Activated CD4-positive, alpha-beta memory T cell treated with anti-CD3 and anti-CD28 coated beads for 36 hours (primary cell): ENCODE measurements at regions of chr6 and their contacts with region 1.

Region 1: DNA sequence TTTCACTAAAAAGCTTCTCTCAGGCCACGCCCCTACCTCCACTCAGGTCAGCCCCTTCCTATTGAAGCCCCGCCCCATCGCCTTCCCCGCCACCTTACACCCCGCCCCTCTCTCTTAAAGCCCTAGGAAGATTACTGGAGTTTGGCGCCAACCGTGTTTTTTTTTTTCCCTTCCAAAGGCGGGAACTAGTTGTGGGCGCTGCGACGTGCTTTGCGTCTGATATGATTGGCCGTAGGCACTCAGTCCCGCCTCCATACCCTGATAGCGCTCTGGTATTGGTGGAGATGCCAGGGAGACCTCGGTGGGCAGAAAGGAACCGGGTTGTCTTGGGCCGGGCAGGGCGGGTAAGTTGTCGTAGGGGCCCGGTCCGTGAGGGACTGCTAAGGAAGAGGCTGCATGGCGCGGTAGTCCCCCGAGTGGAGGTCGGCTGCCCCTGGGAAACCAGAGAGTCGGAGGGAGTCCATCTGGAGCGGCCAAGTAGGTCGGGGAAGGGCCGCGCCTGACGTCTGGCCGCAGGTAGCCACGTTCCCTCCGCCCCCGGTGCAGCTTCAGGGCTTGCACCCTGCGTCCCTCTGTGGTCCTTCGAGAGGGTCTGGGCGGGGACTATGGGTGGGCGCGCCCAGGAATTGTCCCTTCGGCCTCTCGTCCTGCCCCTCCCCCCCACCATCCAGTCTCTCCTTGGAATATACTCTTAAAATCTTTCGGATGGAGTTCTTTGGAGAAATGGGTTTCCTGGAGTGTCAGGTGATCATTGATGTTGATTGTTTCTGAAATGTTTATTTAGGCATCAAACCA is at the start of gene CASP8AP2:
- DNase-seq: peak; percentile 98
- H3K4me3 Mint-ChIP-seq: peak within 1 kb of the TSS; percentile 99
- H3K27ac Mint-ChIP-seq: peak within 1 kb of the TSS; percentile 95
- H3K4me1 Mint-ChIP-seq: peaks cover 34% of the 10 kb centered on the region
- H3K27me3 Mint-ChIP-seq: no peaks in the 10 kb centered on the region
- total RNA-seq, gene CASP8AP2: 32.4 to 34.2 TPM

Region 2: DNA sequence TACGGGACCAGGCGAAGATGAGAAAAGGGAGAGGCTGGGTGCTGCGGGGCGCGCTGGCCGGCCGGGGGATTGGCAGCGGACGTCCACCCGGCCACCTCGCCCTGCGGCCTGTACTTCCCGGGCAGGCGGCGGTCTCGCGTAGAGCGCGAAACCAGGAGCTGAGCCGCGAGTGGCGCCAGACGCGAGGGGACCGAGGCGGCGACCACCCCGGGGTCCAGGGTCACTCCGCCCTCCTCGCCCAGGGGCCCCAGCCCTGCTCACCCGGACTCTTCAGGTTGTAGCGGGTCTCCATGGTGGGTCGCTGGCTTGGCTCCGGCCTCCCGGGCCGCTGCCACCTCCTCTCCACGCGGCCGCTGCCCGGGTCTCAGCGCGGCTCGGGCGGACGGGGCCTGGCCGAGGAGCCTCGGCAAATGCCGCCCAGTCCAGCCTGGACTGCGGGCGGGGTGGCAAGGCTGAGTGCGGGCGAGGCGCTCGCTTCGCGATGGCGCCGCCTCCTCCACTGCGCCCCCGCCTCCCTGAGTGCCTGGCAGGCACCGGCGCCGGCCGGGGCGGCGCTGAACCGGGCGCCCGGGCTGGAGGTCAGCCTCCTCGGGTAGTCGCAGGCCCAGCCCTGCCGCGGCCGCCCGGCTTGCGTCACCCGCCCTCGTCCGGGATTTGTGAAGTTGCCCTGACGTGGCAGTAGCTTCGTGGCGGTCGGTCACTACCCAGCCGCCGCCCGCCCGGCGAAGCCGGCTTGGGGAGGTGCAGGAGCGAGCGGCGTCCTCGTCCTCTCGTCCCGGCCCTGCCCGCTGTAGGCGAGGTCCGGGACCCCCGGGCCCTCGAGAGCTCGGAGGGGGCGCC is 477.3 kb before region 1 on chr6 and contains the start of gene UBE2J1:
- CTCF ChIA-PET with region 1: no interaction called
- POLR2A ChIA-PET with region 1: no interaction called
- intact Hi-C with region 1: loop called (anchors 10 kb)
- DNase-seq: peak; percentile 85
- H3K4me3 Mint-ChIP-seq: peak within 1 kb of the TSS; percentile 91
- H3K27ac Mint-ChIP-seq: peak within 1 kb of the TSS; percentile 84
- H3K4me1 Mint-ChIP-seq: peaks cover 75% of the 10 kb centered on the region
- H3K27me3 Mint-ChIP-seq: no peaks in the 10 kb centered on the region
- total RNA-seq, gene UBE2J1: 23.8 to 24.9 TPM

Region 3: GRCh38 chr6:89432875-89433251 is 396.9 kb before region 1 on chr6 and contains the start of gene ANKRD6:
- CTCF ChIA-PET with region 1: no interaction called
- POLR2A ChIA-PET with region 1: no interaction called
- intact Hi-C with region 1: loop called (anchors 10 kb)
- DNase-seq: peak; percentile 85
- H3K4me3 Mint-ChIP-seq: peak within 1 kb of the TSS; percentile 69
- H3K27ac Mint-ChIP-seq: peak within 1 kb of the TSS; percentile 30
- H3K4me1 Mint-ChIP-seq: peaks cover 21% of the 10 kb centered on the region
- H3K27me3 Mint-ChIP-seq: peaks cover 1% of the 10 kb centered on the region
- total RNA-seq, gene ANKRD6: 3.1 to 4.0 TPM

Region 4: DNA sequence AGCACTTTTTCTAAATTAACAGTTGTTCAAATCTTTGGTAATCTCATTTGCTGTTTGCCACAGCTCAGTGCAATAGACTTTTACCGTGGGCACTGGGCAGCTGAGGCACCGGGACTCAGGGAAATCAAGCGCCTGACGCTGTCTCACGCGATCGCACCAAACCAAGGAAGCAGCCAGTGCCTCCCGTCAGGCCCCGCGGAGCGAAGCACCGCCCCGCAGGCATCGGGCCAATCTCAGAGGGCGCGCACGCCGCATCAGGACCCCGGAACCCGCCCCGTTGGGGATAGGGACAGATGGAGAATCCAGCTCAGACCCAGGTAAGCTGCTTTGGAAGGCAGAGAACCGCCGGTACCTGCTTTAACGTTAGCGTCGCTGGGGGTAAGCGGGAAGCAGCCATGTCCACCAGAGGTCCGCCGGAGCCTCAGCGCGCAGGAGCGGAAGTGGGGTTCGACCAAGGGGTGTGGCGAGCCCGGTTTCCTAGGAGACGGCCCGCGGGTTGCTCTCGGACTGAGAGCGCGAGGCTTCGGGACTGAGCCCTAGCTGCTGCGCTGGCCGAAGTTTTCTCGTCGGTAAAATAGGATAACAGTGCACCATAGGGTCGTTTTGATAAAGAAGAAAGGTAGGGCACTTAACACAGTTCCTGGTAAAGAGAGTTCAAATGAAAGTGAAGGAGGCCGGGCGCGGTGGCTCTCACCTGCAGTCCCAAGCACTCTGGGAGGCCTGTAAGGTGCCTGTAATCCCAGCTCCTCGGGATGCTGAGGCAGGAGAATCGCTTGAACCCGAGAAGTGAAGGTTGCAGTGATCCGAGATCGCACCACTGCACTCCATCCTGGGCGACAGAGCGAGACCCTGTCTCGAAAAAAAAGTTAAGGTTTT is 191.2 kb before region 1 on chr6 and contains the start of gene LYRM2:
- CTCF ChIA-PET with region 1: no interaction called
- POLR2A ChIA-PET with region 1: interaction called, 5 read pairs
- intact Hi-C with region 1: loop called (anchors 1 kb)
- DNase-seq: peak; percentile 95
- H3K4me3 Mint-ChIP-seq: peak within 1 kb of the TSS; percentile 81
- H3K27ac Mint-ChIP-seq: peak within 1 kb of the TSS; percentile 96
- H3K4me1 Mint-ChIP-seq: peaks cover 32% of the 10 kb centered on the region
- H3K27me3 Mint-ChIP-seq: no peaks in the 10 kb centered on the region
- total RNA-seq, gene LYRM2: 25.5 to 26.4 TPM

Region 5: DNA sequence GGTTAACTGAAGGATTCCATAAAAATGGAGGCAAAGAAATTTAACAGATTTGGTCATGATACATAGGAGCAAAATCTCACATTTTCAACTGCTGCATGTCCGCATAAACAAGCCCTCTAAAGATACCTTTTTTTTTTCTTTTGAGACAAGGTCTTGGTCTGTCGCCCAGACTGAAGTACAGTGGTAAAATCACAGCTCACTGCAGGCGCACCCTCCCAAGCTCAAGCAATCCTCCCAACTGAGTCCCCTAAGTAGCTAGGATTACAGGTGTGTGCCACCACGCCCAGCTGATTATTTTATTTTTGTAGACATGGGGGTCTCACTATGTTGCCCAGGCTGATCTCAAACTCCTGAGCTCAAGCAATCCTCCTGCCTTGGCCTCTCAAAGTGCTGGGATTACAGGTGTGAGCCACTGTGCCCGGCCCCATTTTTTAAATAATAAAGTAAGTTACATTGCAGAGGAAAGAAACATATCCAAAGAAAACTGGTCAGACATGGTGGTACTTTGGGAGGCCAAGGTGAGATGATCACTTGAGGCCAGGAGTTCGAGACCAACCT is 23.9 kb before region 1 on chr6:
- CTCF ChIA-PET with region 1: no interaction called
- POLR2A ChIA-PET with region 1: no interaction called
- intact Hi-C with region 1: no loop called
- DNase-seq: no peak
- H3K4me3 Mint-ChIP-seq: no peak overlapping the region
- H3K27ac Mint-ChIP-seq: no peak overlapping the region
- H3K4me1 Mint-ChIP-seq: peaks cover 16% of the 10 kb centered on the region
- H3K27me3 Mint-ChIP-seq: no peaks in the 10 kb centered on the region

Region 6: DNA sequence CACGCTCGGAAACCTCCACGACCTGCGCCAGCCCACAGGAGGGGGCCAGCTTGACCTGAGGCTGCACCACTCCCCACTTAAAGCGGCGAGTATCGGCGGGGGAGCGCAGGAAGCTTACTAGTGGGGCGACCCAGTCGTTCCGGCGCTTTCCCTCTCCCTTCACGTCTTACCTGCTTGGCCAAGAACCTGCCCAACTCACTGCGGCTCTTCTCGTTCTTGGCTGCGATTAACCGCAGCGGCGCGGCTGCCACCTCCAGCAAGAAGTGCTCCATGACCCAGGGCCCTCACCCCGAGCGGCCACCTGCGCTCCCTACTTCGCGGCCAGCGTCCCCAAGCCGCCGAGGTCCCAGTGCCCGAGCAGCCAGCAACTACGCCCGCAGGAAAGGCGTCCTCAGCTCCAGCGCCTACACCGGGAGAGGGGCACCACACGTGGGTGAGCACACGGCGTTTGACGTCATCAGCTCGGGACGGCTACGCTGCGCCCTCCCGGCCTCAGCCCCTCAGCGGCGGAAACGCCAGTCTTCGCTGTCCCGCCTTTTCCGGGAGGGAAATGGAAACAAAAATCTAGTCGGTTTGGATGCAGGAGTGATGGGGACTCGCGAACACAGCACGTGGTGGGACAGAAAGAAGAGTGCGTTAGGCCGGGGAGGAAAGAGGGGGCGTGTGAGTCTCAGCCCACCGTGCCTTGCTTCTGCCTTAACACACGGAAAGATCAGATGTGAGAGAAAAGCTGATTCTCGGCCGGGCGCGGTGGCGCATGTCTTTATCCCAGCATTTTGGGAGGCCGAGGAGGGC is 10.3 kb before region 1 on chr6 and contains the start of gene MDN1:
- CTCF ChIA-PET with region 1: interaction called, 25 read pairs
- POLR2A ChIA-PET with region 1: interaction called, 55 read pairs
- intact Hi-C with region 1: loop called (anchors 1 kb)
- DNase-seq: peak; percentile 94
- H3K4me3 Mint-ChIP-seq: peak within 1 kb of the TSS; percentile 98
- H3K27ac Mint-ChIP-seq: peak within 1 kb of the TSS; percentile 97
- H3K4me1 Mint-ChIP-seq: peaks cover 28% of the 10 kb centered on the region
- H3K27me3 Mint-ChIP-seq: no peaks in the 10 kb centered on the region
- total RNA-seq, gene MDN1: 39.1 to 40.2 TPM

Region 7: DNA sequence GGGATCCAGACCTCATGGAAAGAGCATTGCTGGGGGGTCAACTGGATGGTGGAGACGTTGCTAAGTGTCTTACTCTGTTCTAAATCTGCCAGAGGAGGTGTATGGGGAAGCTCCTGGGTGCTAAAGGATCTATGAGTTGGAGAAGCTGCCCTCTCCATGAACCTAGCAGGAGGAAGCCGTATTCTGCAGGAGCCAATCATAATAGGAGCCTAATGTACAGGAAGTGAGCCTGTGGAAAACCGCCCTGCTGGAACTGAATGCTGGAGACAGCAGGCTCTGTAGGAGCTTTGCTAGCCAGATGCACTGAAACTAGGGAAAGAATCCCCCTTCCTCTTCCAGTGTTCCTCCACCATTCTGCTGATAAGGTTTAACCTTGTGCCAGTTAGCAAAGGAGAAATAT is 10.8 kb after region 1 on chr6:
- CTCF ChIA-PET with region 1: no interaction called
- POLR2A ChIA-PET with region 1: no interaction called
- intact Hi-C with region 1: no loop called
- DNase-seq: no peak
- H3K4me3 Mint-ChIP-seq: no peak overlapping the region
- H3K27ac Mint-ChIP-seq: no peak overlapping the region
- H3K4me1 Mint-ChIP-seq: peaks cover 39% of the 10 kb centered on the region
- H3K27me3 Mint-ChIP-seq: no peaks in the 10 kb centered on the region

Region 8: DNA sequence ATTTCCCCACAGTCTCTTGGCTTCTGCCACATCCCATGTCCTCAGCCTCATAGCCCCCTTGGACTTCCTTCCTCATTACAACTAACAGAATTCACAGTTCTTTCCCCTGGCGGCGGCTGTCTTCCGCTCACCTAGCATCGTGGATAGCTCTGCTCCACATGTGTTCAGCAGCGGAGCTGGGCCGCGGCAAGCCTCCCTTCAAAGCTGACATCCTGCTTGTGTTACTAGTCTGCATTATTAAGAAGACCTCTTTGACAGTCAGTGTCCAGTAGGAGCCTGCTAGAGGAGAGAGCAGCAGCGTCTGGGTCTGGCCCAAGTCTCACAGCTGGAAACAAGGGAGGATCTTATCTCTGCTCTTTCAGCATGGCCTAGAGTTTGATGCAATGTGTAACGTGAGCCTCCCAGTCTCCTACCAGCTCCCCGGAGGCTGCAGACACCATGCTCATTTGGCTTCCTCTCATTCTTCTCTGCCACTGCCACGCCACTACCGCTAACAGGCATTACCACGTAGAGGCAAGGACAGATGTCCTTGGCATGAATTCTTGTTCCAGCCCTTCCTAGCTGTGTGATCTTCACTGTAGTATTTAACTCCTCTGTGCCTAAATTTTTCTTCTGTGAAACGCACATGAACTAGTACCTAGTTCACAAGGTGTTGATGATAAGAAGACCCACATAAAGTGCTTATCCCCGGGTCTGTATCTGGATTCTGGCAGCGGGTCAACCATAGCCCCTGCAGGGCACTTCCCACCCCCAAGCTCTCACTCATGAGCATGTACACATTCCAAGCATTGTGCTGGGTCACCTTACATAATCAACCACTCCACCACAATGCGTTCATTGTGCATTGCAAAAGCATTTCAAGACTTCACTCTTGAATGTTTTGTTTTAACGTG is 573.9 kb after region 1 on chr6:
- CTCF ChIA-PET with region 1: no interaction called
- POLR2A ChIA-PET with region 1: no interaction called
- intact Hi-C with region 1: loop called (anchors 10 kb)
- DNase-seq: no peak
- H3K4me3 Mint-ChIP-seq: peak overlapping the region; percentile 64
- H3K27ac Mint-ChIP-seq: peak overlapping the region; percentile 93
- H3K4me1 Mint-ChIP-seq: peaks cover 81% of the 10 kb centered on the region
- H3K27me3 Mint-ChIP-seq: no peaks in the 10 kb centered on the region

Region 9: DNA sequence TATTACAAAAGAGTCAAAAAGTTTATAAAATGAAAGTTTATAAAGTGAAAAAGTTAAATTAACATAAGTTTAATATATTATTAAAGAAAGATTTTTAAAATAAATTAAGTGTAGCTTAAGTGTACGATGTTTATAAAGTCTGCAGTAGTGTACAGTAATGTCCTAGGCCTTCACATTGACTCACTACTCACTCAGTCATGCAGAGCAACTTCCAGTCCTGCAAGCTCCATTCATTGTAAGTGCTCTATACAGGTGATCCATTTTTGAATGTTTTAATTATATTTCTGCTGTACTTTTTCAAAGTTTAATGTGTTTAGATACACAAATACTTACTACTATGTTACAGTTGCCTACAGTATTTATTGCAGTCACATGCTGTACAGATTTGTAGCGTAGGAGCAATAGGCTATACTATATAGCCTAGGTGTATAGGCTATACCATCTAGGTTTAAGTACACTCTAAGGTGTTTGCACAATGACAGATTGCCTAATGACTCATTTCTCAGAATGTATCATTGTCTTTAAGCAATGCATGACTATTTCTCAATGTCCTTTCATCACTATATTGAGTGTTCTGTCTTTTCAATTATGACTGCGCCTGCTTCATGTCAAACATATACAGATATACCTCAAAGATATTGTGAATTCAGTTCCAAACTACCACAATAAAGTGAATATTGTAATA is 1867.4 kb after region 1 on chr6:
- CTCF ChIA-PET with region 1: no interaction called
- POLR2A ChIA-PET with region 1: no interaction called
- intact Hi-C with region 1: no loop called
- DNase-seq: no peak
- H3K4me3 Mint-ChIP-seq: no peak overlapping the region
- H3K27ac Mint-ChIP-seq: no peak overlapping the region
- H3K4me1 Mint-ChIP-seq: no peaks in the 10 kb centered on the region
- H3K27me3 Mint-ChIP-seq: no peaks in the 10 kb centered on the region